ENCODE measurements at regions of chr6 and their contacts with region 1.

Region 1: GRCh38 chr6:131923356-131923755 is 27.8 kb downstream of the CCN2 start:
- DNase-seq: no peak
- H3K4me3 ChIP-seq: no peak overlapping the region
- H3K27ac ChIP-seq: no peak overlapping the region
- H3K4me1 ChIP-seq: no peaks in the 10 kb centered on the region
- H3K27me3 ChIP-seq: no peaks in the 10 kb centered on the region
- CTCF ChIP-seq: peak in 1 of 3 experiments; percentile 15
- POLR2A ChIP-seq: no peak

Region 2: GRCh38 chr6:131486608-131487007 is 436.7 kb before region 1 on chr6:
- intact Hi-C with region 1: no loop called
- DNase-seq: no peak
- H3K4me3 ChIP-seq: no peak overlapping the region
- H3K27ac ChIP-seq: no peak overlapping the region
- H3K4me1 ChIP-seq: no peaks in the 10 kb centered on the region
- H3K27me3 ChIP-seq: no peaks in the 10 kb centered on the region
- CTCF ChIP-seq: no peak
- POLR2A ChIP-seq: no peak

Region 3: GRCh38 chr6:132218059-132218696 is 294.8 kb after region 1 on chr6:
- intact Hi-C with region 1: loop called (anchors 10 kb)
- DNase-seq: no peak
- H3K4me3 ChIP-seq: no peak overlapping the region
- H3K27ac ChIP-seq: no peak overlapping the region
- H3K4me1 ChIP-seq: no peaks in the 10 kb centered on the region
- H3K27me3 ChIP-seq: no peaks in the 10 kb centered on the region
- CTCF ChIP-seq: peak in 2 of 3 experiments; percentile 32 to 34
- POLR2A ChIP-seq: no peak

Region 4: DNA sequence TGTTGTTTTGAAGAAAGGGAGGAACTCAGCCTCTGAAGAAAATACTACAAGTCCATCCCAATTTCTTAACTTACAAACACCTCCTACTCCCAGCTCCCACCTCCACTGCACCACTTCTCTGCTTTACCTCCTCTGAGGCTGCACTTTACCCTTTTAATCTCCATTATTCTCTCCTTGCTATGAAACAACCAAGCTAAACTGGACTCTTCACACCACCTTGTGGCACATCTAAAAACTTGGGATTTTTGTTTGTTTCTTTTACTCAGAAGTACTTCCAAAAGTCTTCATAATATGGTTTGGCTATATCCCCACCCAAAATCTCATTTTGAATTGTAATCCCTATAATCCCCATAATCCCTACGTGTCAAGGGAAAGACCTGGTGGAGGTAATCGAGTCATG is 335.7 kb after region 1 on chr6:
- intact Hi-C with region 1: loop called (anchors 5 kb)
- DNase-seq: no peak
- H3K4me3 ChIP-seq: no peak overlapping the region
- H3K27ac ChIP-seq: no peak overlapping the region
- H3K4me1 ChIP-seq: no peaks in the 10 kb centered on the region
- H3K27me3 ChIP-seq: no peaks in the 10 kb centered on the region
- CTCF ChIP-seq: peak in 2 of 3 experiments; percentile 29 to 40
- POLR2A ChIP-seq: no peak

Measured in vagina (tissue), 2 donors.